GM23248 (cell line): ENCODE measurements at regions of chr4 and their contacts with region 1.

Region 1: GRCh38 chr4:76430519-76431388 is 4.3 kb upstream of the SHROOM3 start:
- DNase-seq: peak; percentile 63
- H3K4me3 ChIP-seq: peak overlapping the region; percentile 43; the same call in 1 of the 2 replicates
- H3K27ac ChIP-seq: no peak overlapping the region
- H3K4me1 ChIP-seq: peaks cover 9% of the 10 kb centered on the region
- H3K27me3 ChIP-seq: no peaks in the 10 kb centered on the region

Region 2: DNA sequence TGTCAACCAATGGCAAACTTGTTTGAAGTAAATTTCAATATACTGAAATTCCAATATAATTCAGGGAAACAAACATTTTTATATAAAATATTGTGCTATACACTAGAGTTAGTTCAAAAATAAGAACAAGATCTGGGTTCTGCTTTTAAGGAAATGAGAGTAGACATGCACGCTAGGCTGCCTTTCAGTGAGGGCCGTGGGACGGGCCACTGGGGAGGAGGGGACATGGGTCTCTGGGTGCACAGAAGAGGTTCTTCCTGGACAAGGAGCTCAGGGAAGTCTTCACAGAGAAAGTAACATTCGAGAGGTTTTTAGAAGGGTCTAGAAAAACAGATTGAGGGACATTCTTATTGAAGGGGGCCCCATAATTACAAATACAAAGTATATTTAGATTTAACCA is 68.7 kb after region 1 on chr4:
- in situ Hi-C with region 1: loop called (anchors 5 kb)
- DNase-seq: no peak
- H3K4me3 ChIP-seq: no peak overlapping the region
- H3K27ac ChIP-seq: no peak overlapping the region
- H3K4me1 ChIP-seq: no peaks in the 10 kb centered on the region
- H3K27me3 ChIP-seq: peaks cover 20% of the 10 kb centered on the region

Region 3: DNA sequence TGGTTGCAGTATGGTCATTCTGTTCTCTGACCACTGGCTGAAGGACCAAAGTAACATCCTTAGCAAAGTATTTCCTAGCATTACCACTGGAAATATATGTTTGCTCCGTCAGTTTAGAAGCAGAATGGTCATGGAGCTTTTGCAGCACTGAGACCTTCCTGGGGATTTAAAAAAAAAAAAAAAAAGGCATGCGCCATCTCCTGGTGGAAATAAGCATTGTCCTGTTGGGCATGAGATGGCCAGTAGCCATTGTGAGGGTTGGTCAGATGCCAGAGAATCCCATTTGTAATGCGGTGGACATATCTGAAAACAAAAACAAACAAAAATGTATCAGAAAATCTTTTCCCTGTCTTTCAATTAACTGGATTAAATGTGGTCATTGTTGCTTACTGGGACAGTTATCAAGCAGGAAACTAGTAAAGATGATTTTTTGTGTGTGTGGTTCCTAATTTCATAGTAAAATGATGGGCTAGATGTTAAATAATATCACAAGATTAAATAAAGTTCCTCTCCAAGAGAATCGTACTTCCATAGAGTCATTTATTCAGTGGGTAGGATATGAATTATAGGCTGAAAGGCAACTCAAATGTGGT is 327.6 kb after region 1 on chr4:
- in situ Hi-C with region 1: no loop called
- DNase-seq: peak; percentile 86
- H3K4me3 ChIP-seq: no peak overlapping the region
- H3K27ac ChIP-seq: peak overlapping the region; percentile 49
- H3K4me1 ChIP-seq: peaks cover 50% of the 10 kb centered on the region
- H3K27me3 ChIP-seq: no peaks in the 10 kb centered on the region